Activated T-helper 1 cell treated with anti-CD3 and anti-CD28 coated beads, Interleukin-12 subunit alpha, Interleukin-12 subunit beta, Interleukin-2, Interleukin-4 antibody, amounts not matched to agents 30 ng/mL and 10 ng/mL and 1 ng/mL, durations not matched to agents 14 hours and 24 hours and 36 hours (primary cell): ENCODE measurements at regions of chr3 and their contacts with region 1.

Region 1: GRCh38 chr3:149812606-149813366 is at the start of gene RNF13:
- DNase-seq: peak; percentile 90
- H3K4me3 Mint-ChIP-seq: peak within 1 kb of the TSS; percentile 92
- H3K27ac Mint-ChIP-seq: peak within 1 kb of the TSS; percentile 100
- H3K4me1 Mint-ChIP-seq: peaks cover 56% of the 10 kb centered on the region
- H3K27me3 Mint-ChIP-seq: peaks cover 10% of the 10 kb centered on the region
- total RNA-seq, gene RNF13: 41.1 and 41.6 TPM in 2 replicates

Region 2: DNA sequence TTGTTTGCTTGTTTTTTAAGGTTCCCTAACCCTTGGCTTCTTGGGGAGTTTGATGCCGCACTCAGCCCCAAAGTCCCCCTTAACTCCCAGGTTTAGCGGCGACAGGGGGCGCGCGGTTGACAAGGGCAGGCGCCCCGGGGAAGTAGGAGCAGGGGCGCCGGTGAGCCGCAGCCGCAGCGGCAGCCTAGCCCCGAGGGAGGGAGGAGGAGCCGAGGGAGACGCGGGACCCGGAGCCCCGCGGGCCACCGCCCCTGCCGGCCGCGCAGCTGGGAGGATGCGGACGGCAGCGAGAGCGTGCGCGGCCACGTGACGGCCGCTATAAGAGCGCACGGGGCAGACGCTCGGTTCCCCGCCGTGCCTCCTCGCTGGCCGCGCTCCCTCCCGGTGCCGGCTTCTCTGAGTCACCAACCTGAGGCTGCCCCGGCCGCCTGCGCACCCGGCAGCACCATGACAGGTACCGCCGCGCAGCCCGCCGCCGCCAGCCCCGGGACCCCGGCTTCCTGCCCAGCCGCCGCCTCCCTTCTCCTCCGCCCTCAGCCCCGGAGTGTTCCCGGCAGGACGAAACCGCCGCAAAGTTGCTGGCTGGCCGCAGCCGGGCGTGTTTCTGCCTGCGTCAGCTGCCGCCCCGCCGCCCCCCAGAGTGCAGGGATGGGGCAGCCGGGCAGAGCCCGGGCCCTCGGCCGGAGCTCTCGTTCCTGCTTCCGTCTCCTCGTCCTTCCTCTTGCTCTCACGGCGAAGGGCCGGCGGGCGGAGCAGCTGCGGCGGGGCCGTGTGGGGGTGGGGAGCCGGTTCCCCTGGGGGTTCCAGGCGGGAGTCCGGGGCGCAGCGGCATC is 821.4 kb before region 1 on chr3 and contains the start of gene GYG1:
- intact Hi-C with region 1: loop called (anchors 1 kb)
- DNase-seq: peak; percentile 76
- H3K4me3 Mint-ChIP-seq: peak within 1 kb of the TSS; percentile 88
- H3K27ac Mint-ChIP-seq: peak within 1 kb of the TSS; percentile 84
- H3K4me1 Mint-ChIP-seq: peaks cover 39% of the 10 kb centered on the region
- H3K27me3 Mint-ChIP-seq: peaks cover 2% of the 10 kb centered on the region
- total RNA-seq, gene GYG1: 33.6 and 34.1 TPM in 2 replicates

Region 3: GRCh38 chr3:149129326-149130205 is 683.2 kb before region 1 on chr3 and contains the start of gene HPS3:
- intact Hi-C with region 1: loop called (anchors 2 kb)
- DNase-seq: peak; percentile 84
- H3K4me3 Mint-ChIP-seq: peak within 1 kb of the TSS; percentile 92
- H3K27ac Mint-ChIP-seq: peak within 1 kb of the TSS; percentile 88
- H3K4me1 Mint-ChIP-seq: peaks cover 39% of the 10 kb centered on the region
- H3K27me3 Mint-ChIP-seq: peaks cover 33% of the 10 kb centered on the region
- total RNA-seq, gene HPS3: 15.8 and 17.3 TPM in 2 replicates

Region 4: DNA sequence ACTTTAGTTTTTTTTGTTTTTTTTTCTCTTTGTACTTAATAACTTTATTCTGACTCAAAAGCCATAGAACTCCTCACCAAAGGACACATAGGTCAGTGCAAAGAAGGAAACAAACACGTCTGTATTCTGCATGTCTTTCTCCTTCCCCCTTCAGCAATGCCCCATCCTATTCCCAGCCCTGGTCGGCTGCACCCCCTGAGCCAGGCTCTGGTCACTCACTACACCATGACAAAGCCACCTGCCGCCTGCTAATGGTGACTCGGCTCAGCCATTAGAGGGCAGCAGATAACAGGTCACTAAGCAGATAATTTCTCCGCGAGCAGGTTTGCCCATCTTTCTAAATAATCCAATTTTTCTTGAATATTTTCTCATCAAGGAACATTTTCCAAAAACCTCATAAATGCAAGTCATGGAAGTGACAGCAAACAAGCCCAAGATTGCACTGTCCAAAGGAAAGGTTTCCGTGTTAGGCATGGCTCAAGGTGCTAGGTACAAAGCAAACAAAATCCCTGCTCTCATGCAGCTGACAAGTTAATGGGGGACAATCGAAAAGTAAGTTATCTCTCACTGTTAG is 300.5 kb before region 1 on chr3:
- intact Hi-C with region 1: loop called (anchors 2 kb)
- DNase-seq: no peak
- H3K4me3 Mint-ChIP-seq: no peak overlapping the region
- H3K27ac Mint-ChIP-seq: no peak overlapping the region
- H3K4me1 Mint-ChIP-seq: peaks cover 10% of the 10 kb centered on the region
- H3K27me3 Mint-ChIP-seq: peaks cover 24% of the 10 kb centered on the region

Region 5: GRCh38 chr3:149752051-149752787 is 60.6 kb before region 1 on chr3 and contains the start of gene COMMD2:
- intact Hi-C with region 1: loop called (anchors 1 kb)
- DNase-seq: peak; percentile 65
- H3K4me3 Mint-ChIP-seq: peak within 1 kb of the TSS; percentile 95
- H3K27ac Mint-ChIP-seq: peak within 1 kb of the TSS; percentile 59
- H3K4me1 Mint-ChIP-seq: peaks cover 14% of the 10 kb centered on the region
- H3K27me3 Mint-ChIP-seq: peaks cover 4% of the 10 kb centered on the region
- total RNA-seq, gene COMMD2: 44.2 and 44.8 TPM in 2 replicates

Region 6: GRCh38 chr3:150408221-150409102 is 595.7 kb after region 1 on chr3 and contains the start of gene TSC22D2:
- intact Hi-C with region 1: loop called (anchors 1 kb)
- DNase-seq: peak; percentile 92
- H3K4me3 Mint-ChIP-seq: peak within 1 kb of the TSS; percentile 83
- H3K27ac Mint-ChIP-seq: peak within 1 kb of the TSS; percentile 95
- H3K4me1 Mint-ChIP-seq: peaks cover 40% of the 10 kb centered on the region
- H3K27me3 Mint-ChIP-seq: peaks cover 6% of the 10 kb centered on the region
- total RNA-seq, gene TSC22D2: 21.3 and 22.7 TPM in 2 replicates